Vagina (tissue), 2 donors: ENCODE measurements at regions of chr13 and their contacts with region 1.

Region 1: DNA sequence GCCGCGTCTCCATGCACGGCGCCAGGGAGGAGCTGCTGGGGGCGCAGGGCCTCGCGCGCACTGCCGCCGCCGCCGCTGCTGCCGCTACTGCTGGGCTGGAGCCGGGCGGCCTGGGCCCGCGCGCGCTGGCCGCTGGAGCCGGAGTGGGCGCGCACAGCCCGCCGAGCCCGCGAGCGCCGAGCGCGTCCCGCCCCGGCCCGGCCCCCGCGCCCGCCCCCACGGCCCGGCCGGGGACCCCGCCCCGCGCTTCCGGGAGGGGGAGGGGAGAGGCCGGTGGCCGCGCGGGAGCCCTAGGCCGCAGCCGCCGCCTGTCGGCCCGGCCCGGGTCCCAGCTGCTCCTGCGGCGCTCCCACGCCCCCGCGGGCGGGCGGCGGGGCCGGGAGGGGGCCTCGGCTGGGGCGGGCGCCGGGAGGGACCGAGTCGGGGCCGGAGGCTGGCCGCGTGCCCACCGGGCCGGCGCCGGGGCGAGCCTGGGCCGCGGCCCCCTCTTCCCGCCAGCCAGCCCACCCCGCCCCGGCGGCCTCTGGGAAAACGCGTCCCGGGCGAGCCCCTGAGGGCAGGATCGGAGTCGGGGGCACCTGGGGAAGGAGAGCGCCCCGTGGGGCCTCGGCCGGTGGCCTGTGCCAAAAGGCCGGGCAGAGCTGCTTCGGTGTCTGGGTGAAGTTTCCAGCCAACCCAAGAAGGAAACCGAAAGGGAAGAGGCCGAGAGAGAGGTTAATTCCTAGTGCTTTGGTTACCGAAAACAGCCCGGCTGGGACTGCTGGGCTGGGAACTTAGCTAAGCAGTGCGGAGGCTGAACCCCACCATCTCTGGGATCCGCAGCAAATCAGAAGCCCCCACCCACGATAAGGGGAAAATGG is at the start of gene STK24:
- DNase-seq: no peak
- H3K4me3 ChIP-seq: peak within 1 kb of the TSS; percentile 59 to 82
- H3K27ac ChIP-seq: peak within 1 kb of the TSS; percentile 99
- H3K4me1 ChIP-seq: peaks cover 51% of the 10 kb centered on the region
- H3K27me3 ChIP-seq: no peaks in the 10 kb centered on the region
- CTCF ChIP-seq: no peak
- POLR2A ChIP-seq: peak in 1 of 2 donors; percentile 29
- total RNA-seq, gene STK24: 82.5 TPM

Region 2: DNA sequence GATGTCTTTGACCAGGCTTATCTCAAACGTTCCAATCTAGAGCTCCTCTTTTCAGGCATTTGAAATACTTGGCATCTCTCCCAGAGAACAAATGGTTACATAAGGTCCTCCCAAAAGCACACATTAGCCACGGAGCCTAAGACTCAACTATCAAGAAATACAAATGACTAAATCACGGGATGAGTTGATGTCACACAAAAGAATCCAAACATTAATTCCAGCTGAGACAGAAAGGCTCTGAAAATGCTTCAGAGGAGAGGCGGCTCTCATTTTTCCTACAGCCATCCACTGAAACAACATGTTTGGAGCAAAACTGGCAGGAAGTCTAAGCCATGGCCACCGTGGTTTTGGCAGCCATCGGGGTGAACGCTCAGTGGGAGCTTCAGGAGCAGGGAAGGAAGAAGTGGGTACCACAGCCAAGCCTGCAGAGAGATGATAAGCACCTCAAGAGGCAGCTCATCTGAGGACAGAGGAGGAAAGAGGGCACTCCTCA is 122.8 kb before region 1 on chr13:
- intact Hi-C with region 1: loop called (anchors 5 kb)
- DNase-seq: no peak
- H3K4me3 ChIP-seq: no peak overlapping the region
- H3K27ac ChIP-seq: peak overlapping the region; percentile 83
- H3K4me1 ChIP-seq: peaks cover 62% of the 10 kb centered on the region
- H3K27me3 ChIP-seq: no peaks in the 10 kb centered on the region
- CTCF ChIP-seq: no peak
- POLR2A ChIP-seq: no peak

Region 3: DNA sequence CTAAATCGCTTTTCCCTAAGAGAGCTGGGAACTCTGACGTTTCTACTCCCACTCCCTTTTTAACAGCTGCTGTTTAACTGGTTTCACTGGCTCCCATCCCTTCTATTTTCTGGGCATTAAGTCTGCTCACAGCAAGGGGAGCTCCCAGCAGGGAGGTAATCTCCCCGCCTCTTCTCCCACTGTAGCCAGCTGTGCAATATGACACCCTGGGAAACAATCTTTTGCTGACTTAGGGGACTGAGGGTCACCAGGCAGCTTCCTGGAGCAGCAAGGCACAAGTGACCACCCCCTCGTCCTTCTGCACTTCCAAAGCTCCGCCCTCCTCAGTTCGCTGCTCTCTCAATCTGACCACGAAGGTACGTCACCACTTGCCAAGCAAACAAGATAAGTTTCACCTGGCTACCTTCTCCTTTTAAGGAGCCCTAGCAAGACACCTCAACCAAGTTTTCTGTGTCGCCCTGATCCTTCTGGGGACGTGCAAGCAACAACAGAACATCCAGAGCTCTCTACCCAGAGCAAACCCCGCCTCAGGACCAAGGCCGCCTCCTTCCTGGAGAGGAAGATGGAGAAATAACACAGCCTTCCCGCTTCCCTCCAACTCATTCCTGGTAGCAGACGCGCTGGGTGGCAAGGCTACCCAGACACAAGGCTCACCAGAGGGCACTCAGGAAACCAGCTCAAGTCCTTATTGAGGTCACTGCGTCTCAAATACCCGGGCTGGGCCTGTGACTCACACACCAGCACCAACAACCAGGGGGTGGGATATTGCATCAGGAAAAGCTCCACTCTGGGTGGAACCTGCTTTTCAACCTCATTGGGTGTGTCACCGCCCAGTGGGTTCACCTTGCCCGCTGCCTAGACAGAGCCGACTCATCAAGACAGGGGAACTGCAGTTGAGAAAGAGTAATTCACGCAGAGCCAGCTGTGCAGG is 92.6 kb before region 1 on chr13:
- intact Hi-C with region 1: loop called (anchors 10 kb)
- DNase-seq: peak in 1 of 2 donors; percentile 96
- H3K4me3 ChIP-seq: peak overlapping the region; percentile 10 to 16
- H3K27ac ChIP-seq: peak overlapping the region; percentile 91
- H3K4me1 ChIP-seq: peaks cover 99% of the 10 kb centered on the region
- H3K27me3 ChIP-seq: no peaks in the 10 kb centered on the region
- CTCF ChIP-seq: no peak
- POLR2A ChIP-seq: no peak